Dorsolateral prefrontal cortex (tissue), 120 donors: ENCODE measurements at regions of chr2 and their contacts with region 1.

Region 1: GRCh38 chr2:221573430-221574230 is 1.5 kb upstream of the EPHA4 start:
- DNase-seq: peak; percentile 77 to 91 (median 88)
- H3K4me3 ChIP-seq: peak overlapping the region; percentile 49 to 94 (median 83)
- H3K27ac ChIP-seq: peak overlapping the region in 57 of 59 donors; percentile 49 to 94 (median 83)
- H3K27me3 ChIP-seq: peaks cover 0 to 46% (median 2%) of the 10 kb centered on the region in 45 donors
- CTCF ChIP-seq: peak; percentile 88 to 99 (median 98)

Region 2: GRCh38 chr2:219736209-219736608 is 1837.4 kb before region 1 on chr2:
- intact Hi-C with region 1: loop called (anchors 1 to 5 kb)
- DNase-seq: peak in 1 of 10 donors; percentile 21
- H3K4me3 ChIP-seq: no peak overlapping the region
- H3K27ac ChIP-seq: no peak overlapping the region
- H3K27me3 ChIP-seq: no peaks in the 10 kb centered on the region
- CTCF ChIP-seq: peak; percentile 41 to 77 (median 63)

Region 3: DNA sequence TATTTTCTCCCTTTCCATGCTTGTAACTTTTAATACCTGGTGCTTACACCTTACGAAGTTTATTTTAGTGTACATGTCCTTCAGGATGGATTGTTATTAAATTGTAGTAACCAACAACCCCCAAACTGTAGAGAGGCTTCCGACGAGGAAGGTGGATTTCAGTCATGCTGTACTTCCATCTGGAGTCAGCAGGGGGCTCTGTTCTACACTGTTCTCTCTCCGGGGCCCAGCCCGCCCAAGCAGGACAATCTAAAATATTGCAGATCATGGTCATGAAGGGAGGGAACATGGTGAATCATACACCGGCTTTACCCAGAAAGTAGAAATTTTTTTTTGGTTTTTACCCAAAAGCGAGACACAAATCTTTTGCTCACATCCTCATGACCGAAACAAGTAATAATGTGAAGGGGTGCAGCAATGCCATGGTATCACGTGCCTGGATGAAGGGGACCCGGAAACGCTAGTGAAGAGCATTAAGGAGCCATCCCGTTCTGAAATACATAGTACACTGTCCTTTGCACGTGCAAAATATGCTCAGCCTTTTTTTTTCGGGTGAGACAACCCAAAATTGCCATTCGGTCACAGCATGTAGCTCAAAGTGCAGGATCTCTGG is 886.3 kb before region 1 on chr2:
- intact Hi-C with region 1: loop called (anchors 1 to 2 kb)
- DNase-seq: peak; percentile 40 to 75 (median 70)
- H3K4me3 ChIP-seq: no peak overlapping the region
- H3K27ac ChIP-seq: no peak overlapping the region
- H3K27me3 ChIP-seq: peaks cover 0 to 4% (median 0%) of the 10 kb centered on the region in 45 donors
- CTCF ChIP-seq: peak; percentile 60 to 96 (median 88)

Region 4: GRCh38 chr2:221254299-221254698 is 319.3 kb before region 1 on chr2:
- intact Hi-C with region 1: no loop called
- DNase-seq: no peak
- H3K4me3 ChIP-seq: no peak overlapping the region
- H3K27ac ChIP-seq: no peak overlapping the region
- H3K27me3 ChIP-seq: no peaks in the 10 kb centered on the region
- CTCF ChIP-seq: no peak

Region 5: GRCh38 chr2:221969087-221969829 is 395.6 kb after region 1 on chr2:
- intact Hi-C with region 1: loop called (anchors 5 kb)
- DNase-seq: peak in 6 of 10 donors; percentile 5 to 63 (median 50)
- H3K4me3 ChIP-seq: no peak overlapping the region
- H3K27ac ChIP-seq: no peak overlapping the region
- H3K27me3 ChIP-seq: peaks cover 0 to 5% (median 0%) of the 10 kb centered on the region in 45 donors
- CTCF ChIP-seq: peak; percentile 38 to 85 (median 70)